ENCODE measurements at regions of chr19 and their contacts with region 1.

Region 1: DNA sequence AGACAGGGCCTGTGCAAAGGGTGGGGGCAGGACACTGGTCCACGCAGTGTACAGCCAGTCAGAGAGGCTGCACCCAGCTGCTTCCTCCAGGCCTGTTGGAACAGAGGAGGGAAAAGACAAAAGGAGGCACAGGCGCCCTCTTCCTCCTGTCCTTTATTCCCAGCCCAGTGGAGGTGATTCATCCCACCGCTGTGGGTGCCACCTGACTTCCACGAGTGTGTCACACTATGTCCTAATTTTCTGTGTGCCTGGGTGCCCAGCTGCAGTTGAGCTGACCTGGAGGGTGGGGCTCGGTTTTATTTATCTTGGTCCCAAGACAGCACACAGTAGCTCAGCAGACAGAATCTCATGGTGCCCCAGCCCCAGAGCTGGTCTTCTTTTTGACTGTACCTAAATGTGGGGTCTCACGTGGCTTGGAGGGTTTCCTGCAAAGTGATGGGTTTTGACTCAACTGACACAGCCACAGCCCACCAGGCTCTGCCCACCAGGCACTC is 9.0 kb downstream of the EPS15L1 start:
- DNase-seq: peak; percentile 78
- H3K4me3 ChIP-seq: no peak overlapping the region
- H3K27ac ChIP-seq: no peak overlapping the region
- H3K4me1 ChIP-seq: peaks cover 21% of the 10 kb centered on the region
- H3K27me3 ChIP-seq: no peaks in the 10 kb centered on the region
- CTCF ChIP-seq: no peak

Region 2: DNA sequence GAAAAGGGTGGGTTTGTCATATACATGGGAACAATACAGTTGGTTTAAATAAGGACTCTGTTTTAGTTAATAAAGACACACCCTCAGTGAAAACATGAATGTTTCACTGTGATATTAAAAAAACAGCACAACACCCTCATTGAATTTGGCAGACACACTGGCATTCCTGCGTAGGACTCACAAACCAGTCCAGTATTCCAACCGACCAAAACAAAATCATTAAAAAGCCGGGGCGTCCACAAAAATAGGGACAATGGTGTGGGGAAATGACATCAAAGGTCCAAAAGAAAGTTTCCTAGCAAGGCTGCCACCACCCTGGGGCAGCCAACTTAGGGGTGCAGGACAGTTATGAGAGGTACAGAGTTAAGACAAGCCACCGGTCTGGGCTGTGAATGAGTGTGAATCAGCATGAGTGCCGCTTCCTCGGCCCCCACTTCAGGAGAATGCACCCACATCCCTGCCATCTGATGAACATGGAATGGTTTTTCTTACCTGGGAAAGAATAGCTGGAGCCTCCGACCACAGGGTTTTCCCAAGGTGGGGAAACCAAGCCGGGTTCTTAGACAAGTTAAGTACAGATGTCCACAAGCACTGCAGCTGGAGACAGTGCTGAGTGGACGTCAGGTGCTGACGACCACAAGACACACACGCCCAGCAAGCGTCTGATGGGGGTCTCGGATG is 64.9 kb before region 1 on chr19:
- CTCF ChIA-PET with region 1: no interaction called
- dilution Hi-C with region 1: loop called (anchors 5 kb)
- in situ Hi-C with region 1: no loop called
- intact Hi-C with region 1: no loop called
- DNase-seq: peak; percentile 30
- H3K4me3 ChIP-seq: no peak overlapping the region
- H3K27ac ChIP-seq: no peak overlapping the region
- H3K4me1 ChIP-seq: peaks cover 13% of the 10 kb centered on the region
- H3K27me3 ChIP-seq: no peaks in the 10 kb centered on the region
- CTCF ChIP-seq: no peak

Region 3: DNA sequence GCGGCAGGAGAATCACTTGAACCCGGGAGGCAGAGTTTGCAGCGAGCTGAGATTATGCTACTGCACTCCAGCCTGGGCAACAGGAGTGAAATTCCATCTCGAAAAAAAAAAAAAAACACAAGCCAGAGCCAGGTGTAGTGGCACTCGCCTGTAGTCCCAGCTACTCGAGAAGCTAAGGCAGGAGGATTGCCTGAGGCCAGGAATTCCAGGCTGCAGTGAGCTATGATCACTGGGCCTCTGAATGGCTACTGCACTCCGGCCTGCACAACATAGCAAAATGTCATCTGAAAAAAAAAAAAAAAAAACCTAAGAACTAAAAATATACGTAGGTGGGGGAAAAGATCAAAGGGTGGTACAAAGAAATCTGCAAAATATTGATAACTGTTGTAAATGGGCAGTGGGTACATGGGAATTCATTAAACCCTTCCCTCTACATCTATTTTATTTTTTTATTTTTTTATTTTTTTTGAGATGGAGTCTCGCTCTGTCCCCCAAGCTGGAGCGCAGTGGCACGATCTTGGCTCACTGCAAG is 10.4 kb before region 1 on chr19:
- CTCF ChIA-PET with region 1: interaction called, 14 read pairs
- dilution Hi-C with region 1: no loop called
- in situ Hi-C with region 1: no loop called
- intact Hi-C with region 1: no loop called
- DNase-seq: no peak
- H3K4me3 ChIP-seq: no peak overlapping the region
- H3K27ac ChIP-seq: no peak overlapping the region
- H3K4me1 ChIP-seq: peaks cover 12% of the 10 kb centered on the region
- H3K27me3 ChIP-seq: no peaks in the 10 kb centered on the region
- CTCF ChIP-seq: no peak

Measured in mammary epithelial cell (primary cell).